ENCODE measurements at regions of chr22 and their contacts with region 1.

Region 1: DNA sequence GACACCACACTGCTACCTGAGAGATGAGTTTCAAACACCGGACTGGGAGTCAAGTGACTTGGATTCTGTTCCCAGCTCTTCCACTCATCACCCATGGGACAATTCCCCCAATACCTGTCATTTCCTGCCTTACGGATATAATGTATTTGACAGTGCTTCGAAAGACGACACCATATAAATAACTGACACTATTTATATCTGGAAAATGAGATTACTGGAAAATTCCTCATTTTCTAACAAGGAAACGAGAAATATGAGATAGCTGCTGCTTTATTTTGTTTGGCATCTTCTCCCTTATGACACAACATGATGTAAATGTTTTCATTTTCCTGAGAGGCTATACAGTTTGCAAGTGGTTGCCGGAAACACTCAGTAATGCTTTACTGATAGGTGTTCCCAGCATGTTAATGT is 8.6 kb downstream of the HSCB start:
- DNase-seq: peak; percentile 96
- H3K4me3 ChIP-seq: peak overlapping the region in 1 of 3 experiments; percentile 9
- H3K27ac ChIP-seq: peak overlapping the region; percentile 73
- H3K4me1 ChIP-seq: peaks cover 20% of the 10 kb centered on the region
- H3K27me3 ChIP-seq: no peaks in the 10 kb centered on the region
- CTCF ChIP-seq: no peak
- POLR2A ChIP-seq: no peak

Region 2: GRCh38 chr22:28674121-28674563 is 76.3 kb before region 1 on chr22:
- CTCF ChIA-PET with region 1: no interaction called
- POLR2A ChIA-PET with region 1: no interaction called
- dilution Hi-C with region 1: no loop called
- intact Hi-C with region 1: loop called (anchors 2 kb)
- DNase-seq: no peak
- H3K4me3 ChIP-seq: no peak overlapping the region
- H3K27ac ChIP-seq: no peak overlapping the region
- H3K4me1 ChIP-seq: peaks cover 2% of the 10 kb centered on the region
- H3K27me3 ChIP-seq: no peaks in the 10 kb centered on the region
- CTCF ChIP-seq: no peak
- POLR2A ChIP-seq: no peak